H1 (cell line): ENCODE measurements at regions of chr20 and their contacts with region 1.

Region 1: DNA sequence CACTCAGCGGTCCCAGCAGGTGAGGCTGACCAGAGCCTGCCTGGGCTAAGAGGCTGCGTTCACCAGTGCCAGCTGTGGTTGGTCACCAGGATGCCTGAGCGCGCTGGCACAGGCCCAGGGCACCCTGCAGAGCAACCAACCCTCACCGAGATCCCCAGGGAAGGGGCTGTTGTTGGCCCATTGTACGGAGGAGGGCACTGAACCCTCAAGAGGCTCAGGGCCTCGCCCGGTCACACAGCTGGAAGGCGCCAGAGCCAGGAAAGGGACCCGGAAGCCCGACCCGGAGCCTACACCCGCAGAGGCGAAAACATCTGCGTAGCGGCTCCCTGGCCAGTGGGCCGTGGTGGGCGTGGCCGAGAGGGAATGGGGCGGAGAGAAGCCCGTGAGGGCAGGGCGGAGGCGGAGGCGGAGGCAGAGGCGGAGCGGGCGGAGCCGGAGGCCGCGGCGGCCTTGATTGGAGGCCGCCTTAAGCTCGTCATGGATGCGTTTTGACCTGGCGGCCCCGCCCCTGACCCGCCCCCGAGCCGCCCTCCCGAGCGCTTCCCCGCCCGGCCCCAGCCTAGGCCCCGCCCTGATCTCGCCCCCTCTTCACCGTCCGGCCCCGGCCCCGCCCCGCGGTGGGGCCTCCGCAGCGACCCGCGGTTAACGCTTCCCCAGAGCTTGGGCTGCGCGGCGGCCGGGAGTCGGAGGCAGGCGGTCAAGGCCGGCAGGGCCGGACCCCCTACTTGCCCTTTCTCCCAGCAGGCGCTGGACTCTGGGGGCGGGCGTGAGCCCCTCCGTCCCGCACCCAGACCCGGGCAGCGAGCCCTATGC is 2.2 kb upstream of the MRGBP start:
- DNase-seq: peak; percentile 86 to 98
- H3K4me3 ChIP-seq: peak overlapping the region; percentile 21 to 65 (median 46); a peak in 7 of 8 replicates
- H3K27ac ChIP-seq: no peak overlapping the region
- H3K4me1 ChIP-seq: peaks cover 0 to 11% (median 6%) of the 10 kb centered on the region in 4 experiments; a peak in 4 of 7 replicates
- H3K27me3 ChIP-seq: peaks cover 0 to 18% (median 11%) of the 10 kb centered on the region in 4 experiments; a peak in 5 of 7 replicates
- CTCF ChIP-seq: no peak
- EP300 ChIP-seq: no peak
- POLR2A ChIP-seq: no peak
- RAD21 ChIP-seq: no peak

Region 2: GRCh38 chr20:62668441-62669027 is 125.6 kb before region 1 on chr20:
- CTCF ChIA-PET with region 1: interaction called, 65 read pairs
- POLR2A ChIA-PET with region 1: interaction called, 5 read pairs
- DNase-seq: peak; percentile 44 to 89
- H3K4me3 ChIP-seq: no peak overlapping the region
- H3K27ac ChIP-seq: no peak overlapping the region
- H3K4me1 ChIP-seq: no peaks in the 10 kb centered on the region
- H3K27me3 ChIP-seq: no peaks in the 10 kb centered on the region; a peak in 1 of 7 replicates
- CTCF ChIP-seq: peak; percentile 87 to 96 (median 94)
- EP300 ChIP-seq: no peak
- POLR2A ChIP-seq: no peak
- RAD21 ChIP-seq: peak; percentile 92 to 96

Region 3: GRCh38 chr20:62697468-62697912 is 96.6 kb before region 1 on chr20:
- CTCF ChIA-PET with region 1: interaction called, 12 read pairs
- POLR2A ChIA-PET with region 1: no interaction called
- DNase-seq: no peak
- H3K4me3 ChIP-seq: no peak overlapping the region
- H3K27ac ChIP-seq: no peak overlapping the region
- H3K4me1 ChIP-seq: no peaks in the 10 kb centered on the region; a peak in 1 of 7 replicates
- H3K27me3 ChIP-seq: no peaks in the 10 kb centered on the region; a peak in 1 of 7 replicates
- CTCF ChIP-seq: no peak
- EP300 ChIP-seq: no peak
- POLR2A ChIP-seq: no peak
- RAD21 ChIP-seq: no peak

Region 4: GRCh38 chr20:62716198-62716940 is 77.7 kb before region 1 on chr20:
- CTCF ChIA-PET with region 1: interaction called, 15 read pairs
- POLR2A ChIA-PET with region 1: no interaction called
- DNase-seq: no peak
- H3K4me3 ChIP-seq: no peak overlapping the region
- H3K27ac ChIP-seq: no peak overlapping the region
- H3K4me1 ChIP-seq: no peaks in the 10 kb centered on the region
- H3K27me3 ChIP-seq: peaks cover 0 to 2% (median 0%) of the 10 kb centered on the region in 4 experiments; a peak in 1 of 7 replicates
- CTCF ChIP-seq: no peak
- EP300 ChIP-seq: no peak
- POLR2A ChIP-seq: no peak
- RAD21 ChIP-seq: no peak

Region 5: GRCh38 chr20:62765021-62765420 is 29.1 kb before region 1 on chr20:
- CTCF ChIA-PET with region 1: interaction called, 11 read pairs
- POLR2A ChIA-PET with region 1: no interaction called
- DNase-seq: no peak
- H3K4me3 ChIP-seq: no peak overlapping the region
- H3K27ac ChIP-seq: no peak overlapping the region
- H3K4me1 ChIP-seq: peaks cover 0 to 9% (median 0%) of the 10 kb centered on the region in 4 experiments; a peak in 4 of 7 replicates
- H3K27me3 ChIP-seq: no peaks in the 10 kb centered on the region; a peak in 1 of 7 replicates
- CTCF ChIP-seq: peak in 1 of 3 experiments; percentile 1; a peak in 1 of 4 replicates
- EP300 ChIP-seq: no peak
- POLR2A ChIP-seq: no peak
- RAD21 ChIP-seq: no peak

Region 6: DNA sequence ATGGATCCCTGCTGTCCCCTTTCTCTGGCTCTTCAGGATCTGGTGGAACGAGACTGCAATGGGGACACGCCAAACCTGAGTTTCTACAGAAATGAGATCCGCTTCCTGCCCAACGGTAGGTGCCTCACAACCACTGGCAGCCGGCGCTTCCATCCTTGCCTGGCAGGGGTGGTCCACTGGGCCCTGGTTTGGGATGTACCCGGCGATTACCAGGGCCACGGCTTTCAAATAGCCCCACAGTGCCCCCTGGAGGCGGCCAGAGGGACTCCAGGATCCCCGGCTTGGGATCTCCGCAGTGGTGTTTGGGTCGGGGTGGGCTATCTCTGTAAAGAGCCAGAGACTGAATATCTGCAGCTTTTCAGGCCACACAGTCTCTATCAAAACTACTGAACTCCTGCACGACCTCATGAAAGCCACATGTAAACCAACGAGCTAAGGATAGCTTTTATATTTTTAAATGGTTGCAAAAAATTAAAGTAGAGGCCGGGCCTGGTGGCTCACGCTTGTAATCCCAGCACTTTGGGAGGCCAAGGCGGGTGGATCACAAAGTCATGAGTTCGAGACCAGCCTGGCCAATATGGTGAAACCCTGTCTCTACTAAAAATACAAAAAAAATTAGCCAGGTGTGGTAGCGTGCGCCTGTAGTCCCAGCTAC is 14.2 kb after region 1 on chr20:
- CTCF ChIA-PET with region 1: interaction called, 37 read pairs
- POLR2A ChIA-PET with region 1: interaction called, 3 read pairs
- DNase-seq: peak in 1 of 2 experiments; percentile 97
- H3K4me3 ChIP-seq: no peak overlapping the region
- H3K27ac ChIP-seq: no peak overlapping the region
- H3K4me1 ChIP-seq: peaks cover 0 to 12% (median 8%) of the 10 kb centered on the region in 4 experiments; a peak in 6 of 7 replicates
- H3K27me3 ChIP-seq: peaks cover 0 to 6% (median 3%) of the 10 kb centered on the region in 4 experiments; a peak in 4 of 7 replicates
- CTCF ChIP-seq: peak; percentile 77 to 88 (median 84)
- EP300 ChIP-seq: no peak
- POLR2A ChIP-seq: no peak
- RAD21 ChIP-seq: peak; percentile 78 to 90